CD4-positive, alpha-beta memory T cell (primary cell): ENCODE measurements at regions of chr13 and their contacts with region 1.

Region 1: DNA sequence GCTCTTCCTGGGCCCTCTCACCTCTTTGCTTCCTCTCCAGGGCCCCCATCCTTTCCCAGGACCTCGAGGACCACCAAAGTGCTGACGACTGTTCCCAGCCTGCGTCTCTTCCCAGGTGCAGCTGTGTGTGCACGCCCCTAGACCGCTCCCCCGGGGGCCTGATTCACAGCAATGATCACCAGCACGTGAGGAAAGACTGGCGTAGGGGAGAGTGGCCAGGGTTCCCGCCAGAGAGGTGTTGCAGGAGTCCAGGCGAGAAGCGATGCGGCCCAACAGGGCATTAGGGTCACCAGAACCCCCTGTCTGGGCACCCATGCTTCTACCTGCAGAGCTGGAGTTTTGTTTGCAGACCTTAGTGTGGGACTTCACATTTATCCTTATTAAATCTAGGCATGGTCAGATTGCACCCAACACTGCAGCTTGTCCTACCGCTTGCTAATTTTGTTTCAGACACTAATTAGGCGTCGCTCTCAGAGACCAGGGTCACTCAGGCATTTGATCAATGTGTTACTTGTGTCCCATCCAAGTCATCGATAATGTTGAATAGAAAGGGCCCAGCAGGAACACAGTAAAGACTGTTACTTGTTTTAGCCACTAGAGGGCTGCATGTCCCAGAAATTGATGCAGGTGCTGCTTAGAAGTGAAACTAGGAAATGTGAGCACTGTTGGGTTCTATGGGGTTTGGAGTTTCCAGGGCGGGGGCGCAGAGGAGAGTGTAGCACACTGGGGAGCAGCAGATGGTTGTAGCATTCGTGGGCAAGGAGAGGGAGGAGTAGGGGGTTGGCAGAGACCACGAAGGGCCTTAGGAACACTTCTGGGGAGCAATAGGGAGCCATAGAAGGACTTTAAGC is 53.2 kb downstream of the CDADC1 start:
- DNase-seq: peak; percentile 77 to 79 (median 77)
- H3K4me3 ChIP-seq: peak overlapping the region; percentile 15 to 45
- H3K4me3 Mint-ChIP-seq: peak overlapping the region; percentile 70 to 85 (median 80)
- H3K27ac ChIP-seq: no peak overlapping the region
- H3K27ac Mint-ChIP-seq: peak overlapping the region in 6 of 7 donors; percentile 14 to 91 (median 74)
- H3K4me1 ChIP-seq: peaks cover 5% of the 10 kb centered on the region
- H3K4me1 Mint-ChIP-seq: peaks cover 6 to 14% (median 11%) of the 10 kb centered on the region in 4 donors
- H3K27me3 ChIP-seq: no peaks in the 10 kb centered on the region
- H3K27me3 Mint-ChIP-seq: no peaks in the 10 kb centered on the region

Region 2: DNA sequence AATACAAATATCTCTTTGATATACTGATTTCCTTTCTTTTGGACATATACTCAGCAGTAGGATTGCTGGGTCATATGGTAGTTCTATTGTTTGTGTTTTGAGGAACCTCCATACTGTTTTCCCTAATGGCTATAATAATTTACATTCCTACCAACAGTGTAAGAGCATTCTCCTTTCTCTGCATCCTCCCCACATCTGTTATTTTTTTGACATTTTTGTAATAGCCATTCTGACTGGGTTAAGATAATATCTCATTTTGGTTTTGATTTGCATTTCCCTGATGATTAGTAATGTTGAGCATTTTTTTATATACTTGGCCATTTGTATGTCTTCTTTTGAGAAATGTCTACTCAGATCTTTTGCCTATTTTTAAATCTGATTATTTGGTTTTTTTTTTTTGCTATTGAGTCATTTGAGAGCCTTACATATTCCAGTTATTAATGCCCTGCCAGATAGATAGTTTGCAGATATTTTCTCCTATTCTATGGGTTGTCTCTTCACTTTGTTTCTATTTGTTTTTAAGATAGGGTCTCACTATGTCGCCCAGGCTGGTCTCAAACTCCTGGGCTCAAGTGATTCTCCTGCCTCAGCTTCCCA is 229.5 kb before region 1 on chr13:
- CTCF ChIA-PET with region 1: no interaction called
- POLR2A ChIA-PET with region 1: no interaction called
- intact Hi-C with region 1: no loop called
- DNase-seq: no peak
- H3K4me3 ChIP-seq: no peak overlapping the region
- H3K4me3 Mint-ChIP-seq: no peak overlapping the region
- H3K27ac ChIP-seq: no peak overlapping the region
- H3K27ac Mint-ChIP-seq: peak overlapping the region in 1 of 7 donors; percentile 74
- H3K4me1 ChIP-seq: no peaks in the 10 kb centered on the region
- H3K4me1 Mint-ChIP-seq: peaks cover 6 to 11% (median 8%) of the 10 kb centered on the region in 4 donors
- H3K27me3 ChIP-seq: no peaks in the 10 kb centered on the region
- H3K27me3 Mint-ChIP-seq: no peaks in the 10 kb centered on the region

Region 3: GRCh38 chr13:49314344-49314882 is 13.4 kb after region 1 on chr13:
- CTCF ChIA-PET with region 1: interaction called, 13 read pairs
- POLR2A ChIA-PET with region 1: no interaction called
- intact Hi-C with region 1: no loop called
- DNase-seq: no peak
- H3K4me3 ChIP-seq: no peak overlapping the region
- H3K4me3 Mint-ChIP-seq: no peak overlapping the region
- H3K27ac ChIP-seq: no peak overlapping the region
- H3K27ac Mint-ChIP-seq: no peak overlapping the region
- H3K4me1 ChIP-seq: no peaks in the 10 kb centered on the region
- H3K4me1 Mint-ChIP-seq: peaks cover 0 to 4% (median 0%) of the 10 kb centered on the region in 4 donors
- H3K27me3 ChIP-seq: no peaks in the 10 kb centered on the region
- H3K27me3 Mint-ChIP-seq: no peaks in the 10 kb centered on the region

Region 4: GRCh38 chr13:49371943-49372613 is 71.1 kb after region 1 on chr13:
- CTCF ChIA-PET with region 1: no interaction called
- POLR2A ChIA-PET with region 1: no interaction called
- intact Hi-C with region 1: loop called (anchors 1 kb)
- DNase-seq: peak; percentile 51 to 78 (median 75)
- H3K4me3 ChIP-seq: no peak overlapping the region
- H3K4me3 Mint-ChIP-seq: peak overlapping the region in 7 of 8 donors; percentile 43 to 74 (median 59)
- H3K27ac ChIP-seq: no peak overlapping the region
- H3K27ac Mint-ChIP-seq: peak overlapping the region in 5 of 7 donors; percentile 57 to 78 (median 68)
- H3K4me1 ChIP-seq: peaks cover 25% of the 10 kb centered on the region
- H3K4me1 Mint-ChIP-seq: peaks cover 17 to 36% (median 26%) of the 10 kb centered on the region in 4 donors
- H3K27me3 ChIP-seq: no peaks in the 10 kb centered on the region
- H3K27me3 Mint-ChIP-seq: peaks cover 0 to 6% of the 10 kb centered on the region in 2 donors

Region 5: DNA sequence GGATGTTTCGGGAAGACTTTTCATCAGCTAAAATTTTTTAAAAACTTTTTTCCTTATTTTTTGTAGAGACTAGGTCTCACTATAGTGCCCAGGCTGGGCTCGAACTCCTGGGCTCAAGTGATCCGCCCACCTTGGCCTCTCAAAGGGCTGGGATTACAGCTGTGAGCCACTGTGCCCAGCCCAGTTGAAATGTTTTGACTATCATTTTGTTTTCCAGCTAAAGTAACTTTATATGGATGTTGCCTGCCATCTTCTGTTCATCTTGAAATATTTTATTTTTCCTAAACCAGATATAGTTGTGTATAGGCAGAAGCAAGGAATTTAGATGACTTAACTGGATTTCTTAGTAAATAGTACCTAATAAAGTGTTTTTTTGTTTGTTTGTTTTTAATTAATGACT is 135.9 kb after region 1 on chr13:
- CTCF ChIA-PET with region 1: interaction called, 3 read pairs
- POLR2A ChIA-PET with region 1: no interaction called
- intact Hi-C with region 1: loop called (anchors 1 kb)
- DNase-seq: no peak
- H3K4me3 ChIP-seq: no peak overlapping the region
- H3K4me3 Mint-ChIP-seq: no peak overlapping the region
- H3K27ac ChIP-seq: no peak overlapping the region
- H3K27ac Mint-ChIP-seq: no peak overlapping the region
- H3K4me1 ChIP-seq: no peaks in the 10 kb centered on the region
- H3K4me1 Mint-ChIP-seq: no peaks in the 10 kb centered on the region
- H3K27me3 ChIP-seq: no peaks in the 10 kb centered on the region
- H3K27me3 Mint-ChIP-seq: no peaks in the 10 kb centered on the region

Region 6: GRCh38 chr13:49585220-49586157 is 284.5 kb after region 1 on chr13 and contains the start of gene RCBTB1:
- CTCF ChIA-PET with region 1: no interaction called
- POLR2A ChIA-PET with region 1: no interaction called
- intact Hi-C with region 1: loop called (anchors 5 kb)
- DNase-seq: peak; percentile 66 to 77 (median 72)
- H3K4me3 ChIP-seq: peak within 1 kb of the TSS; percentile 64 to 76
- H3K4me3 Mint-ChIP-seq: peak within 1 kb of the TSS; percentile 88 to 99 (median 96)
- H3K27ac ChIP-seq: peak within 1 kb of the TSS; percentile 82
- H3K27ac Mint-ChIP-seq: peak within 1 kb of the TSS; percentile 80 to 96 (median 92)
- H3K4me1 ChIP-seq: peaks cover 21% of the 10 kb centered on the region
- H3K4me1 Mint-ChIP-seq: peaks cover 15 to 52% (median 41%) of the 10 kb centered on the region in 4 donors
- H3K27me3 ChIP-seq: no peaks in the 10 kb centered on the region
- H3K27me3 Mint-ChIP-seq: no peaks in the 10 kb centered on the region
- total RNA-seq, gene RCBTB1: 20.7 to 21.3 TPM

Region 7: GRCh38 chr13:49606747-49607648 is 306.0 kb after region 1 on chr13:
- CTCF ChIA-PET with region 1: interaction called, 81 read pairs
- POLR2A ChIA-PET with region 1: no interaction called
- intact Hi-C with region 1: loop called (anchors 1 kb)
- DNase-seq: peak; percentile 72 to 78 (median 77)
- H3K4me3 ChIP-seq: peak overlapping the region in 1 of 2 donors; percentile 13
- H3K4me3 Mint-ChIP-seq: peak overlapping the region; percentile 82 to 95 (median 89)
- H3K27ac ChIP-seq: no peak overlapping the region
- H3K27ac Mint-ChIP-seq: peak overlapping the region in 6 of 7 donors; percentile 22 to 95 (median 72)
- H3K4me1 ChIP-seq: no peaks in the 10 kb centered on the region
- H3K4me1 Mint-ChIP-seq: peaks cover 2 to 5% (median 3%) of the 10 kb centered on the region in 4 donors
- H3K27me3 ChIP-seq: no peaks in the 10 kb centered on the region
- H3K27me3 Mint-ChIP-seq: no peaks in the 10 kb centered on the region